ENCODE measurements at regions of chr9 and their contacts with region 1.

Region 1: DNA sequence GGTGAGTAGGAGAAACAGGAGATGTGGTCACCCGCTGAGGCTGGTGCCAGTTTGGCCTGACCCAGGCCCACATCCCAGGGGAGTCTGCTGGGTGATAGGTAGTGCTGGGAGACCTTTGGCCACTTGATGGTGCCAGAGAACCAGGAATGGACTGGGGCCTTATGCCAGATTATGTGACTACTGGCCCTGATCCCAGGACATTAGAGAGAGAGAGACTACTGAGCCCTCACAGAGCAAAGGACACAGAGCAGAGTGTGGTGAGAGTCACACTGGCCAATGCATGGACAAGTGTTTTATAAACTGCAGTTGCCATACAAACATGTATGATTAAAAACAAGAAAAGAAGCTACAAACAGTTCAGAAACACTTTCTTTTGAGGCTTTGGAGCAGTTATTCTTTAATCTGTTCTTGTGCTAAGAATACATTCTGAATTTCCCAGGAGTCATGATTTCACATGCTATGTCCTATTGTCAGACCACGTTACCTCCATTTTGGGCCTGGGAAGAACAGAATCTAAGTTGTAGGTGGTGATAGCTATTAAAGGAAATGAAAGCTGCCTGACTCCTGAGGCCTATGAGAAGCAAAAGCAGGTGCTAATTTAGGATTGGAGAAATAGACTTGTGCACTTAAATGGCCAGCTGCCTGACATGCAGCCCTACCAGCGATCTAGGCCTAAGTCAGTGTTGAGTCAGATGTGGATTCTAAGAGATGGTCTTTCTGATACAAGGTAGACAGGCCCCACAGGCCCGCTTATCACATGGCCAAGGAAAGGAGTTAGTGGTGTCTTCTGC is 32.6 kb upstream of the TMOD1 start:
- DNase-seq: peak; percentile 75
- H3K4me3 ChIP-seq: no peak overlapping the region
- H3K27ac ChIP-seq: peak overlapping the region in 1 of 2 donors; percentile 19
- H3K4me1 ChIP-seq: no peaks in the 10 kb centered on the region
- H3K27me3 ChIP-seq: no peaks in the 10 kb centered on the region
- CTCF ChIP-seq: peak; percentile 33 to 88 (median 80)
- POLR2A ChIP-seq: no peak

Region 2: DNA sequence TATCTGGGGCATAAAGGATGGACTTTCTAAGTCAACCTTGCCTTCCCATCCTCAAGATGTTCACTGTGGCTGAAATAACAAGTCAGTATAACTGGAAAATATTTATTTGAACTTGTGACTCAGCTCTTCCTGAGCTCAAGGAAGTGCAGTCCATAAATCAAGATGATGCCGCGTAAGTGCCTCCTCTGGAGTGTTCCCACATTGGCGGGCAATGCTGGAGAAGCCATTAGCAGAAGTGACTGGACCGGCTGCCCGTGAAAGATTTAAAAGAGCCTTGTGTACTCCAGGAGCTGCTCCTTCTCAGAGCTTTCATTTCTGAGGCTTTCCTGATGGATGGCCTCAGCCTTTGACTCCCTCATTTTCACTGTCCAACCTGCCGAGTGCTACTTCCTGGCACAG is 50.1 kb after region 1 on chr9:
- intact Hi-C with region 1: loop called (anchors 5 kb)
- DNase-seq: peak; percentile 80
- H3K4me3 ChIP-seq: no peak overlapping the region
- H3K27ac ChIP-seq: peak overlapping the region; percentile 47 to 68
- H3K4me1 ChIP-seq: peaks cover 6% of the 10 kb centered on the region
- H3K27me3 ChIP-seq: no peaks in the 10 kb centered on the region
- CTCF ChIP-seq: no peak
- POLR2A ChIP-seq: no peak

Region 3: DNA sequence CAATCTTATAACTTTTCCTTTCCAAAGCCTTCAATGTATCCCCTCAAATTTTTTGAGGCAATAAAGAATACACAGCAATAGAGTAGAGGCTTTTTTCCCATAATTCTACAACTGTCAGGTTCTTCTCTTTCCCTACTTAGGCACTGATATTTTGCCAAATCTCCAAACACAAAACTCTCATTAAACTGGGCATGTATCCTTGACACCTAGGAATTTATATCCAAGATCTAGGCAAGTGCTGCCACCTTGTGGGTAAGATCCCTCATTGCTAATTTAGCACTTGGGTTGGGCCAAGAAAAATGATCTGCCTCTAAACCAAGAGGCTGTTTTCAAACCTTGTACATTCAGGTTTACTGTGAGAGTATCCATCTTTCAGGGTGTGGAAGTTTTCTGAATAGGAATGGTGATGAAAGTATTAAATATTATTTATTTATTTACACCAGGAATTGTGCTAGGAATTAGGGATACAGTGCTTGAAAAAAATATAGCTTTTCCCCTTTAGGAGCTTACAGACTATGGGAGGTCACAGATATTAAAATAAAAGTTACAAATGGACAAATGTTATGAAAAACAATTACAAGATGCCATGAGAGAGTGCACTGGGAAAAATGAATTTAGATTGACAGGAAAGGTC is 146.7 kb after region 1 on chr9:
- intact Hi-C with region 1: loop called (anchors 2 kb)
- DNase-seq: peak; percentile 67
- H3K4me3 ChIP-seq: no peak overlapping the region
- H3K27ac ChIP-seq: no peak overlapping the region
- H3K4me1 ChIP-seq: no peaks in the 10 kb centered on the region
- H3K27me3 ChIP-seq: no peaks in the 10 kb centered on the region
- CTCF ChIP-seq: peak; percentile 66 to 82 (median 80)
- POLR2A ChIP-seq: no peak

Measured in prostate gland (tissue), 2 donors.